Caco-2 (cell line): ENCODE measurements at regions of chr13 and their contacts with region 1.

Region 1: GRCh38 chr13:75687150-75687763 is 51.1 kb downstream of the LMO7 start:
- DNase-seq: peak in 1 of 2 experiments; percentile 53
- H3K4me3 ChIP-seq: no peak overlapping the region
- H3K4me3 Mint-ChIP-seq: no peak overlapping the region
- H3K27ac Mint-ChIP-seq: no peak overlapping the region
- H3K4me1 ChIP-seq: peaks cover 23% of the 10 kb centered on the region; the same call in 1 of the 2 replicates
- H3K4me1 Mint-ChIP-seq: peaks cover 27% of the 10 kb centered on the region
- H3K27me3 ChIP-seq: no peaks in the 10 kb centered on the region
- H3K27me3 Mint-ChIP-seq: no peaks in the 10 kb centered on the region
- CTCF ChIP-seq: peak; percentile 56 to 65

Region 2: GRCh38 chr13:75675421-75675820 is 11.8 kb before region 1 on chr13:
- CTCF ChIA-PET with region 1: interaction called, 6 read pairs
- POLR2A ChIA-PET with region 1: no interaction called
- intact Hi-C with region 1: loop called (anchors 1 kb)
- DNase-seq: no peak
- H3K4me3 ChIP-seq: no peak overlapping the region
- H3K4me3 Mint-ChIP-seq: no peak overlapping the region
- H3K27ac Mint-ChIP-seq: no peak overlapping the region
- H3K4me1 ChIP-seq: no peaks in the 10 kb centered on the region
- H3K4me1 Mint-ChIP-seq: no peaks in the 10 kb centered on the region
- H3K27me3 ChIP-seq: no peaks in the 10 kb centered on the region
- H3K27me3 Mint-ChIP-seq: no peaks in the 10 kb centered on the region
- CTCF ChIP-seq: no peak

Region 3: GRCh38 chr13:75771818-75772217 is 84.6 kb after region 1 on chr13:
- CTCF ChIA-PET with region 1: no interaction called
- POLR2A ChIA-PET with region 1: no interaction called
- intact Hi-C with region 1: no loop called
- DNase-seq: no peak
- H3K4me3 ChIP-seq: no peak overlapping the region
- H3K4me3 Mint-ChIP-seq: peak overlapping the region; percentile 25
- H3K27ac Mint-ChIP-seq: peak overlapping the region; percentile 13
- H3K4me1 ChIP-seq: peaks cover 76% of the 10 kb centered on the region
- H3K4me1 Mint-ChIP-seq: peaks cover 44% of the 10 kb centered on the region
- H3K27me3 ChIP-seq: no peaks in the 10 kb centered on the region
- H3K27me3 Mint-ChIP-seq: no peaks in the 10 kb centered on the region
- CTCF ChIP-seq: no peak

Region 4: DNA sequence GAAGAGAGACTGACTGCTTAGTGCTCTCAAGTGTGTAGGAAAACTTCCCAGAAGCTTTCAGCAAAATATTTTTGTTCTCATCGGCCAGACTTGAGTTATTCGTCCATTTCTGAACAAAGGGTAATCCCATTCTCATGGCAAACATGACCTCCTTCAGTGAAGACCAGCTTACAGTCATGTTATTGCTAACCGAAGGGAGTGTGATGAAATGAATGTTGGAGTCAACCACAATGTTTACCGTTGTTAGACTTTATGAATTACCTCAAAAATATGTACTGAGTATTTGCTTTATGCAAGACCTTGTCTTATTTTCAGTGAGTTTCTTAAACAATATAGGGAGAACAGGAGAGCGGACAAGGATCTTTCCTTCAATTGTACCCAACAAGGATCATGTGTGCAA is 177.5 kb after region 1 on chr13:
- CTCF ChIA-PET with region 1: no interaction called
- POLR2A ChIA-PET with region 1: no interaction called
- intact Hi-C with region 1: loop called (anchors 5 kb)
- DNase-seq: no peak
- H3K4me3 ChIP-seq: no peak overlapping the region
- H3K4me3 Mint-ChIP-seq: no peak overlapping the region
- H3K27ac Mint-ChIP-seq: no peak overlapping the region
- H3K4me1 ChIP-seq: 0 out of 2 replicates have a peak, but pooled peaks cover 4% of the 10 kb centered on the region
- H3K4me1 Mint-ChIP-seq: no peaks in the 10 kb centered on the region
- H3K27me3 ChIP-seq: no peaks in the 10 kb centered on the region
- H3K27me3 Mint-ChIP-seq: no peaks in the 10 kb centered on the region
- CTCF ChIP-seq: no peak

Region 5: DNA sequence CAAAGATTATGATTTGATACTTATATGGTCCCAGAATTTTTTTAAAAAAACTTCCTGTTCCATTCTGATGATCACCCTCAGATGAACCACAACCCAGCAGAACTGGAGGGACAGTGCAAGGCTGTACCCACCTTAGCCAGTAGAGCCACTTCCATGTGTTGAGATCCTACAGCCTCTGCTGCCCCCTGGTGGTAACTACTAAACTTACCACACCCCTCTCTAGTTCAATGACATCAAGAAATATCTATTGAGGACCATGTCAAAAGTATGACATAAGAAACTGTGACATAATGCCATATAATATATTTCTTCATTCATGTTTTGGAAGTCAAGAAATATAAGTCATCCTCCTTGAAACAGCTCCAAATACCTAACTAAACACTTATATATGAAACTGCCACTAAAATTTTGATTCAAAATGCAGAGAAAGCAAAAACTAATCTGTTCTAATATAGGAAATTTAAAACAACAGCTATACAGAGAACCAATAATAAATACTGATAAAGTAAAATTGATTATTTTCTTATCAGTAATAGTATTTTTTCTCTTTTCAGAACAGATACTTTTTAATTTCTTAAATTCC is 786.4 kb after region 1 on chr13:
- CTCF ChIA-PET with region 1: no interaction called
- POLR2A ChIA-PET with region 1: no interaction called
- intact Hi-C with region 1: loop called (anchors 2 kb)
- DNase-seq: peak; percentile 81 to 85
- H3K4me3 ChIP-seq: no peak overlapping the region
- H3K4me3 Mint-ChIP-seq: no peak overlapping the region
- H3K27ac Mint-ChIP-seq: peak overlapping the region; percentile 7
- H3K4me1 ChIP-seq: no peaks in the 10 kb centered on the region
- H3K4me1 Mint-ChIP-seq: no peaks in the 10 kb centered on the region
- H3K27me3 ChIP-seq: no peaks in the 10 kb centered on the region
- H3K27me3 Mint-ChIP-seq: no peaks in the 10 kb centered on the region
- CTCF ChIP-seq: peak; percentile 84 to 94

Region 6: GRCh38 chr13:76903544-76904162 is 1216.4 kb after region 1 on chr13:
- CTCF ChIA-PET with region 1: no interaction called
- POLR2A ChIA-PET with region 1: no interaction called
- intact Hi-C with region 1: loop called (anchors 1 kb)
- DNase-seq: peak; percentile 72 to 80
- H3K4me3 ChIP-seq: no peak overlapping the region
- H3K4me3 Mint-ChIP-seq: no peak overlapping the region
- H3K27ac Mint-ChIP-seq: no peak overlapping the region
- H3K4me1 ChIP-seq: no peaks in the 10 kb centered on the region
- H3K4me1 Mint-ChIP-seq: no peaks in the 10 kb centered on the region
- H3K27me3 ChIP-seq: no peaks in the 10 kb centered on the region; the same call in 1 of the 2 replicates
- H3K27me3 Mint-ChIP-seq: peaks cover 15% of the 10 kb centered on the region
- CTCF ChIP-seq: peak; percentile 91 to 99